IMR-90 (cell line): ENCODE measurements at regions of chr4 and their contacts with region 1.

Region 1: DNA sequence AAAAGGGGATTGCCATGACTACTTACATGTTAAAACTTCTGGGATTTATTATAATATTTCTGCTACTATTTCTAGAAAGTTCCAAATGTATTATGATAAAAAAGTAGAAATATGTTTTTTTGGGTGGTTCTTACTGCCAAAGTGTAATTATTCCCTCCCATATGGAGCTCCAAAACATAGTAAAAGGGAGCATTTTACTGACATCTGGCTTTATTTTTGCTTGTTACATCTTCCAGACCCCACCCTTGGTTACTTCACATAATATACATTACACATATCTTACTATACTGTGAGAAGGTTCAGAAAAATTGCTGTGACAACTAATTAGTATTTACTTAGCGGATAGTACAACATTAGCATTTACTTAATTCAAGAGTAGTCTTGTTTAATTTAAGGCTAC is 205.1 kb upstream of the TLL1 start:
- DNase-seq: no peak
- ATAC-seq: no peak
- H3K4me3 ChIP-seq: no peak overlapping the region
- H3K27ac ChIP-seq: no peak overlapping the region
- H3K4me1 ChIP-seq: no peaks in the 10 kb centered on the region
- H3K27me3 ChIP-seq: no peaks in the 10 kb centered on the region
- CTCF ChIP-seq: no peak
- POLR2A ChIP-seq: no peak
- RAD21 ChIP-seq: no peak

Region 2: DNA sequence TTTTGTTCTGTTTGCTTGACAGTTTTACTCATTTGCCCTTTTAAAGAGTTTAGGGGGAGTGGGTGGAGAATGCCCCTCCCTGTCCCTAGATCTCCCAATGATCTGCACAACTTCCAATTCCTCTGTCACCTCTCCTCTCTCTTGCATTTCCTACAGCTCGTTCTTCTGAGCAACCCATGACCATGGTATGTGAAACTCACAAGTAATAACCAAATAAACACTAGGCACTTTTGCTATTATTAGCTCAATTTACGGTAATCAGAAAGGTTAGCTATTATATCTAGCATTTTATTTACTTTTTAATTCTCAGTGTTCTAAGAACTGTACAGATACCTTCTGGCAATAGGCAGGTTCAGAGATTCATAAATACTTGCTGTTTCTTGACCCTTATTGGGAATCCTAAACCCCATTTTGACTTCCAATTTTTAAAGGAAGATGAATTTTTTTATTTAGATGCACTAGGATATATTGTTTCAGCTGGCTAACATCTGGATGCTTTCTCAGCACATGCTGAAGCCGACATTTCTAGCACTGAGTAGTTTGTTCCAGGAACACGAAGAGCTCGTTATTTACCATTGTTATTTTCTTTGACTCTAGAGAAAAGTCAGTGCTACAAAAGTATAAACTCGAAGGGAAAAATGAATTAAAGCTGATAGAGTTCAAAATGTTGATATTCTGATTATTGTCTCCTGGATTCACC is 10.4 kb after region 1 on chr4:
- CTCF ChIA-PET with region 1: no interaction called
- POLR2A ChIA-PET with region 1: no interaction called
- dilution Hi-C with region 1: no loop called
- in situ Hi-C with region 1: no loop called
- intact Hi-C with region 1: no loop called
- DNase-seq: no peak
- ATAC-seq: no peak
- H3K4me3 ChIP-seq: no peak overlapping the region
- H3K27ac ChIP-seq: no peak overlapping the region
- H3K4me1 ChIP-seq: no peaks in the 10 kb centered on the region
- H3K27me3 ChIP-seq: no peaks in the 10 kb centered on the region
- CTCF ChIP-seq: no peak
- POLR2A ChIP-seq: no peak
- RAD21 ChIP-seq: no peak

Region 3: GRCh38 chr4:165986956-165987698 is 319.2 kb after region 1 on chr4:
- CTCF ChIA-PET with region 1: no interaction called
- POLR2A ChIA-PET with region 1: interaction called, 14 read pairs
- dilution Hi-C with region 1: no loop called
- in situ Hi-C with region 1: no loop called
- intact Hi-C with region 1: no loop called
- DNase-seq: no peak
- ATAC-seq: no peak
- H3K4me3 ChIP-seq: no peak overlapping the region
- H3K27ac ChIP-seq: no peak overlapping the region
- H3K4me1 ChIP-seq: no peaks in the 10 kb centered on the region
- H3K27me3 ChIP-seq: no peaks in the 10 kb centered on the region
- CTCF ChIP-seq: no peak
- POLR2A ChIP-seq: no peak
- RAD21 ChIP-seq: no peak